ENCODE measurements at regions of chr1 and their contacts with region 1.

Region 1: GRCh38 chr1:22416555-22417454 is 34.8 kb upstream of the ZBTB40 start:
- DNase-seq: peak; percentile 77
- H3K4me3 Mint-ChIP-seq: no peak overlapping the region
- H3K27ac Mint-ChIP-seq: no peak overlapping the region
- H3K4me1 Mint-ChIP-seq: no peaks in the 10 kb centered on the region
- H3K27me3 Mint-ChIP-seq: peaks cover 29% of the 10 kb centered on the region
- CTCF ChIP-seq: peak; percentile 97

Region 2: GRCh38 chr1:21232044-21232443 is 1184.8 kb before region 1 on chr1:
- CTCF ChIA-PET with region 1: no interaction called
- POLR2A ChIA-PET with region 1: no interaction called
- intact Hi-C with region 1: loop called (anchors 10 kb)
- DNase-seq: peak; percentile 79
- H3K4me3 Mint-ChIP-seq: no peak overlapping the region
- H3K27ac Mint-ChIP-seq: no peak overlapping the region
- H3K4me1 Mint-ChIP-seq: no peaks in the 10 kb centered on the region
- H3K27me3 Mint-ChIP-seq: no peaks in the 10 kb centered on the region
- CTCF ChIP-seq: peak; percentile 77

Region 3: DNA sequence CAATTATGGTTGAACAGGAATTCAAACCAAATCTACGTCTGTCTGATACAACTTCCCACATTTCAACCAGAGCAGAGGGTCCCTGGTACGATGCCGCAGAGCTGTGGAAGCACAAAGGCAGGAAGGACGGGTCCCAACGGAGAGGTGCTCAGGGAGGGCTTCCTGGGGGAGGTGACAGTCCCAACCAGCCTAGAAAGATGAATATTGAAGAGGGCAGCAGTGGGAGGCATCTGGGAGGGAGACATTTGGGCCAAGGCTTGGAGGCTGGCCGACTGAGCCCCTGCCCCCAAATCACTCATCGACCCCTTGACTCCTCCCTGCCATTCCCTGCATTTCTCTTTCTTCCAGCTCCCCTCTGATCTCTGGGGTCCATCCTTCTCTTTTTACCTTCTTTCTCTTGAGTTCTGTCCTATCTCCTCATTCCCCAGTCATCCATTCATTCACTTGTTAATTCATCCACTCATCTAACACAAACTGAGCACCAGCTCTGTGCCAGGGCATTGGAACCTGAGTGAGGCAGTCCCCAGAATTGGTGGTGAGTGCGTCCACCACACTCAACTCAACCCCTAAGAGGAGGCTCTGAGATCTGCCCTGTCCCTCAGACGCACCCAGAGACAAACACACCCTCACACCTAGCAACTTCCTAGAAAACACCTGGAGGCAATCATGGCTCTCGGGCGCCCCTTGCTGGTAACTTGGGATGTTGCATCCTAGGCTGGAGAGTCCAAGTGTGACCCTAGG is 453.2 kb before region 1 on chr1:
- CTCF ChIA-PET with region 1: no interaction called
- POLR2A ChIA-PET with region 1: no interaction called
- intact Hi-C with region 1: loop called (anchors 1 kb)
- DNase-seq: peak; percentile 88
- H3K4me3 Mint-ChIP-seq: no peak overlapping the region
- H3K27ac Mint-ChIP-seq: peak overlapping the region; percentile 4
- H3K4me1 Mint-ChIP-seq: peaks cover 7% of the 10 kb centered on the region
- H3K27me3 Mint-ChIP-seq: no peaks in the 10 kb centered on the region
- CTCF ChIP-seq: peak; percentile 91

Region 4: GRCh38 chr1:22131875-22132486 is 284.8 kb before region 1 on chr1:
- CTCF ChIA-PET with region 1: interaction called, 30 read pairs
- POLR2A ChIA-PET with region 1: no interaction called
- intact Hi-C with region 1: loop called (anchors 1 kb)
- DNase-seq: peak; percentile 61
- H3K4me3 Mint-ChIP-seq: no peak overlapping the region
- H3K27ac Mint-ChIP-seq: no peak overlapping the region
- H3K4me1 Mint-ChIP-seq: peaks cover 3% of the 10 kb centered on the region
- H3K27me3 Mint-ChIP-seq: no peaks in the 10 kb centered on the region
- CTCF ChIP-seq: peak; percentile 95

Region 5: DNA sequence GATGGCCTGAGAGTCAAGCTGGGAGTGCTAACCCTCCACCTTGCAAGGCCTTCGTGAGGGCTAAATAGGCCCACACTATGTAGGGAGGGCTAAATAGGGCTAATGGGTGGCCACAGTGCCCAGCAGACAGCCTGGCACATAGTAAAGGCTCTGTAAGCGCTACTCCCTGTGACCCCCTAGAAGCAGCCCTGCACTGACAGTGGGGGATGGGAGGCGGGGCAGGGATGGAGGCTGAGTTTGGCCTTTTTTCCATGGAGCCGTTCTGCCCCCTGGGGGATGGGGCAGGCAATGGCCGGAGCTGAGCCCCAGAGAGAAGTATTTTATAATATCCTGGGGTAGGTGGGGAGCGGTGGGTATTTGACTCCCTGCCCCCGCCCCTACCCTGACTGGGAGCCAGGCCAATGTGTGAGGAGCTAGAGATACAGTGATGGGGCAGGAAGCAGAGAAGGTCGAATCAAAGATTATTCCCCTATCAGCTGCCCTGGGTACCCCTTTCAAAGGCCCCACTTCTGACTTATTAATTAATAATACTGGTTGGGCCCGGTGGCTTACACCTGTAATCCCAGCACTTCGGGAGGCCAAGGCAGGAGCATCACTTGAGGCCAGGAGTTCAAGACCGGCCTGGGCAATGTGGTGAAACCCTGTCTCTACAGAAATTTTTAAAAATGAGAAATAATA is 513.6 kb after region 1 on chr1:
- CTCF ChIA-PET with region 1: no interaction called
- POLR2A ChIA-PET with region 1: no interaction called
- intact Hi-C with region 1: loop called (anchors 10 kb)
- DNase-seq: peak; percentile 68
- H3K4me3 Mint-ChIP-seq: no peak overlapping the region
- H3K27ac Mint-ChIP-seq: no peak overlapping the region
- H3K4me1 Mint-ChIP-seq: no peaks in the 10 kb centered on the region
- H3K27me3 Mint-ChIP-seq: peaks cover 54% of the 10 kb centered on the region
- CTCF ChIP-seq: peak; percentile 72

Measured in MCF 10A (cell line).